Endothelial cell of umbilical vein (primary cell): ENCODE measurements at regions of chr20 and their contacts with region 1.

Region 1: GRCh38 chr20:38073307-38074071 is 39.9 kb downstream of the RPRD1B start:
- DNase-seq: peak; percentile 96
- H3K4me3 ChIP-seq: no peak overlapping the region
- H3K27ac ChIP-seq: peak overlapping the region; percentile 35
- H3K4me1 ChIP-seq: peaks cover 14% of the 10 kb centered on the region
- H3K27me3 ChIP-seq: no peaks in the 10 kb centered on the region
- CTCF ChIP-seq: peak; percentile 68 to 82
- POLR2A ChIP-seq: peak; percentile 24

Region 2: DNA sequence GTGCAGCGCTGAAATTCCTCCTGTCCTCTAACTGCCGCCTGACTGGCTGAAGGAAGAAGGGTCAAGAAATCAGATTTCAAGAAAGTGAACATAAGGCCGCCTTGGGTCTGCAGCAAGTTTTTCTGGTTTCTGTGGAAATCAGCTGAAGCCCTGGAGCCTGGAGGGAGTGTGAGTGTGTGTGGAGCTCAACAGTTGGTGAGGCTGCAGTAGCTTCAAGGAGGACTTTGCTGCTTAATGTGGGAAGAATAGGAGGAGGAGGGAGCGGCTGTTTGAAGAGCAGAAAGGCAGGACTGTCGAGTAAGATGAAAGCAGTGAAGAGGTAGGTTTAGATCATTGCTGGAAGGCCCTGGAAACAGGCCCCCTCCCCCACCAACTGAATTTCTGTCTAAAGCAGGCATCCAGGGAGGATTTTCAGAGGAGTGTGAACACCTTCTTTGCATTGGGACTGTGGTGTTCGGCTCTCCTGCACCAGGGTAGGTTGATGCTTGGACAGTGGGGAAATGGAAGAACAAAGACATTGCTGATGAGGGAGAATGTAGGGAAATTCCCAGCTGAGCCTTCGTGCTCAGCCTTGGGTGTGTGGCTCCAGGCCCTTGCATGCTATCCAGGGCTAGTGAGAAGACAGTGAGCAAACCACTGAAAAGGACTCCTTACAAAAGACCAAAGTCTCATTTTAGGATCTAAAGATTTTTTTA is 250.1 kb before region 1 on chr20:
- CTCF ChIA-PET with region 1: no interaction called
- POLR2A ChIA-PET with region 1: no interaction called
- dilution Hi-C with region 1: no loop called
- intact Hi-C with region 1: no loop called
- DNase-seq: no peak
- H3K4me3 ChIP-seq: no peak overlapping the region
- H3K27ac ChIP-seq: no peak overlapping the region
- H3K4me1 ChIP-seq: no peaks in the 10 kb centered on the region
- H3K27me3 ChIP-seq: no peaks in the 10 kb centered on the region
- CTCF ChIP-seq: no peak
- POLR2A ChIP-seq: no peak

Region 3: GRCh38 chr20:38094373-38094891 is 20.9 kb after region 1 on chr20:
- CTCF ChIA-PET with region 1: interaction called, 23 read pairs
- POLR2A ChIA-PET with region 1: no interaction called
- dilution Hi-C with region 1: no loop called
- intact Hi-C with region 1: no loop called
- DNase-seq: peak; percentile 72
- H3K4me3 ChIP-seq: no peak overlapping the region
- H3K27ac ChIP-seq: peak overlapping the region; percentile 74
- H3K4me1 ChIP-seq: peaks cover 44% of the 10 kb centered on the region
- H3K27me3 ChIP-seq: no peaks in the 10 kb centered on the region
- CTCF ChIP-seq: no peak
- POLR2A ChIP-seq: no peak

Region 4: GRCh38 chr20:38127011-38127621 is 53.6 kb after region 1 on chr20:
- CTCF ChIA-PET with region 1: interaction called, 104 read pairs
- POLR2A ChIA-PET with region 1: interaction called, 3 read pairs
- dilution Hi-C with region 1: no loop called
- intact Hi-C with region 1: loop called (anchors 2 kb)
- DNase-seq: peak; percentile 96
- H3K4me3 ChIP-seq: no peak overlapping the region
- H3K27ac ChIP-seq: peak overlapping the region; percentile 60
- H3K4me1 ChIP-seq: peaks cover 52% of the 10 kb centered on the region
- H3K27me3 ChIP-seq: no peaks in the 10 kb centered on the region
- CTCF ChIP-seq: no peak
- POLR2A ChIP-seq: peak; percentile 40

Region 5: GRCh38 chr20:38143646-38144554 is 70.4 kb after region 1 on chr20:
- CTCF ChIA-PET with region 1: interaction called, 36 read pairs
- POLR2A ChIA-PET with region 1: interaction called, 6 read pairs
- dilution Hi-C with region 1: no loop called
- intact Hi-C with region 1: no loop called
- DNase-seq: peak; percentile 96
- H3K4me3 ChIP-seq: no peak overlapping the region
- H3K27ac ChIP-seq: peak overlapping the region; percentile 93
- H3K4me1 ChIP-seq: peaks cover 87% of the 10 kb centered on the region
- H3K27me3 ChIP-seq: no peaks in the 10 kb centered on the region
- CTCF ChIP-seq: no peak
- POLR2A ChIP-seq: peak; percentile 69

Region 6: DNA sequence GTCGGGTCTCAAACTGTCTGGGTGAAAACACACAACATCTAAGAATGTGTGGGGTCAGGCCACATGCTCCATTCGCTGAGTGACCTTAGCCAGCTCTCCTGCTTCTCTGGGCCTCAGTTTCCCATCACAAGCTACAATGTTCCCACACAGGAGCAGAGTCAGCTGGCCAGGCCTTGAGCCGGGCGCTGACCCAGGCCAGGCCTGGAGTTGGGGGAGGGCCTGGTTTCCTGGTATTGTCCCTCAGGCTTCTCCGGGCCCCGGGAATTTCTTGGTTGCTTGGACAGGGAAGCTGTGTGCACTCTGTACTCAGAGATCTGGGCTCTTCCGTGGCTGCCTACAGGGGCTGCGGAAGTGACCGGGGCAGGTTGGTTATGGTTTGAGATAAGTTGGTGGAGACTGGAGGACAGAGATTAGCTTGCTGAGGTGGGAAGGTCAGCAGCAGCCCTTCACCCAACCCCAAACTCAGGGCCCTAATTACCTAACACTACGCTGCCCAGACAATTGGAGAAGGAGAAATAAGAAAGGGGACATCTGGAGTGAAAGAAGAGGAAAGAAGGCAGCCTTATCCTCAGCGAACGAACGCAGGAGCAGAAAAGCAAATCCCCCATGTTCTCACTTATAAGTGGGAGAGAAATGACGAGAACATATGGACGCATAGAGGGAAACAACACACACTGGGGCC is 85.3 kb after region 1 on chr20:
- CTCF ChIA-PET with region 1: interaction called, 29 read pairs
- POLR2A ChIA-PET with region 1: no interaction called
- dilution Hi-C with region 1: no loop called
- intact Hi-C with region 1: no loop called
- DNase-seq: peak; percentile 99
- H3K4me3 ChIP-seq: no peak overlapping the region
- H3K27ac ChIP-seq: peak overlapping the region; percentile 96
- H3K4me1 ChIP-seq: peaks cover 89% of the 10 kb centered on the region
- H3K27me3 ChIP-seq: no peaks in the 10 kb centered on the region
- CTCF ChIP-seq: no peak
- POLR2A ChIP-seq: no peak

Region 7: GRCh38 chr20:38173237-38174156 is 100.0 kb after region 1 on chr20:
- CTCF ChIA-PET with region 1: interaction called, 35 read pairs
- POLR2A ChIA-PET with region 1: no interaction called
- dilution Hi-C with region 1: no loop called
- intact Hi-C with region 1: no loop called
- DNase-seq: peak; percentile 71
- H3K4me3 ChIP-seq: no peak overlapping the region
- H3K27ac ChIP-seq: no peak overlapping the region
- H3K4me1 ChIP-seq: peaks cover 31% of the 10 kb centered on the region
- H3K27me3 ChIP-seq: no peaks in the 10 kb centered on the region
- CTCF ChIP-seq: no peak
- POLR2A ChIP-seq: no peak